Activated CD4-positive, alpha-beta T cell treated with anti-CD3 and anti-CD28 coated beads, Interleukin-2, amount 10 ng/mL, durations not matched to agents 24 days and 14 days (primary cell): ENCODE measurements at regions of chr10 and their contacts with region 1.

Region 1: GRCh38 chr10:59234816-59235429 is 58.5 kb downstream of the PHYHIPL start:
- DNase-seq: no peak
- H3K4me3 Mint-ChIP-seq: no peak overlapping the region
- H3K27ac Mint-ChIP-seq: no peak overlapping the region
- H3K4me1 Mint-ChIP-seq: no peaks in the 10 kb centered on the region
- H3K27me3 Mint-ChIP-seq: peaks cover 2% of the 10 kb centered on the region

Region 2: DNA sequence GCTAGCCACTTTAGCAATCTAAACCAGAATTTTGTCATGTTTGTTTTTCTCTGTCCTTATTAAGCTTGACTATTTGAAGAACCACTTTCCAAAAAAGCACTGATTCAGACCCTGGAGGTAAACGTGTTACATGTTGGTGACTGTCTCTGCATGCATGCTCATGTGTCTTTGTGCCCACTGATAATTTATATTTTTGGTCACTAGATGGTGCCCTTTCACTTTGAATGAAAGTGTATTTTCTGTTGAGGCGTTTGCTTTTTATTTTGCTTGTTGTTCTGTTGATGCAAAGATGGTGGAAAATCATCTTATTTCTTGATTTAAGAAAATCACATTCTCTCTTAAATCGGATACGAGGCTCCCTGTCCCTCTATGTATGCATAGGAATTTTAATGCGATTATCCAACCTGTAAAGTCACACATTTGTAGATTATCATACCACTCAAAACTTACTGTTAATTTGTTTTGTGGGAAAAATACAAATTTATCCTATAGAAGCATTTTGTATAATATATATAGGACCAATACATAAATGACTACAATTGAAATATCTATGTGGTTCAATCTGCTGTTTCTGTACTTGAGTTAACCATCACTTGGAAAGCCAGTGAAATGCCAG is 452.9 kb before region 1 on chr10:
- intact Hi-C with region 1: loop called (anchors 10 kb)
- DNase-seq: peak; percentile 62
- H3K4me3 Mint-ChIP-seq: no peak overlapping the region
- H3K27ac Mint-ChIP-seq: no peak overlapping the region
- H3K4me1 Mint-ChIP-seq: no peaks in the 10 kb centered on the region
- H3K27me3 Mint-ChIP-seq: no peaks in the 10 kb centered on the region

Region 3: GRCh38 chr10:58919927-58920654 is 314.8 kb before region 1 on chr10:
- intact Hi-C with region 1: no loop called
- DNase-seq: no peak
- H3K4me3 Mint-ChIP-seq: no peak overlapping the region
- H3K27ac Mint-ChIP-seq: no peak overlapping the region
- H3K4me1 Mint-ChIP-seq: no peaks in the 10 kb centered on the region
- H3K27me3 Mint-ChIP-seq: no peaks in the 10 kb centered on the region

Region 4: GRCh38 chr10:58952747-58953466 is 282.0 kb before region 1 on chr10:
- intact Hi-C with region 1: loop called (anchors 10 kb)
- DNase-seq: peak; percentile 70
- H3K4me3 Mint-ChIP-seq: no peak overlapping the region
- H3K27ac Mint-ChIP-seq: no peak overlapping the region
- H3K4me1 Mint-ChIP-seq: no peaks in the 10 kb centered on the region
- H3K27me3 Mint-ChIP-seq: no peaks in the 10 kb centered on the region